CD8-positive, alpha-beta T cell (primary cell): ENCODE measurements at regions of chr5 and their contacts with region 1.

Region 1: DNA sequence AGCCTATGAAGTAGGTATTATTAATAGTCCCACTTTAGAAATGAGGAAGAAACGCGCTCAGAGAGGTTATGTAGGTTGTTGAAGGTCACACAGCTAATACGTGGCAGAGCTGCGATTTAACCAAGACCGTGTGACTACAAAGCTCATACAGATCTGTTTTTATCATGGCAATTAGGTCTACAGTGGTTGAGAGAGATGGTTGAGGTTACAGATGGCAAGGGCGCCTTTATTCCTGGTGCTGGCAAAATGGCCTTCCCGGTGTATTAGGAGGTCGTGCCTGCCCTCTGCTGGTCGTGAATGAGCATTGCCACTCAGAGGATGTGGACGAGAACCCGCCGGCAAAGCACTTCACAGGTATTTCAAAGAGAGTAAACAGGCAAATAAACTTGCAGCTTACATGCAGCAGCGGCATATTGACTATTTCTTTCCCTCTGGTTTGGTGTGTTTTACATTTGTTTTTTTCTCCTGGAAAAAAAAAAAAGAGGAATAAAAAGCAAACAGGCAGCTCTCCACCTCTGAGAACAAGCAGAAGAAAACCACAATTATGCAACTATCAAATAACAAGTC is 65.3 kb upstream of the EGFLAM start:
- DNase-seq: peak; percentile 6 to 62 (median 42)
- ATAC-seq: no peak
- H3K4me3 ChIP-seq: no peak overlapping the region
- H3K4me3 Mint-ChIP-seq: no peak overlapping the region
- H3K27ac ChIP-seq: no peak overlapping the region
- H3K27ac Mint-ChIP-seq: no peak overlapping the region
- H3K4me1 ChIP-seq: no peaks in the 10 kb centered on the region
- H3K4me1 Mint-ChIP-seq: peaks cover 5% of the 10 kb centered on the region
- H3K27me3 ChIP-seq: no peaks in the 10 kb centered on the region
- H3K27me3 Mint-ChIP-seq: peaks cover 40% of the 10 kb centered on the region
- CTCF ChIP-seq: peak; percentile 81

Region 2: GRCh38 chr5:36720688-36721087 is 1472.4 kb before region 1 on chr5:
- CTCF ChIA-PET with region 1: no interaction called
- POLR2A ChIA-PET with region 1: no interaction called
- intact Hi-C with region 1: no loop called
- DNase-seq: no peak
- ATAC-seq: no peak
- H3K4me3 ChIP-seq: no peak overlapping the region
- H3K4me3 Mint-ChIP-seq: no peak overlapping the region
- H3K27ac ChIP-seq: no peak overlapping the region
- H3K27ac Mint-ChIP-seq: no peak overlapping the region
- H3K4me1 ChIP-seq: peaks cover 4% of the 10 kb centered on the region
- H3K4me1 Mint-ChIP-seq: peaks cover 24% of the 10 kb centered on the region
- H3K27me3 ChIP-seq: no peaks in the 10 kb centered on the region
- H3K27me3 Mint-ChIP-seq: no peaks in the 10 kb centered on the region
- CTCF ChIP-seq: no peak

Region 3: GRCh38 chr5:37412515-37413277 is 780.4 kb before region 1 on chr5:
- CTCF ChIA-PET with region 1: interaction called, 9 read pairs
- POLR2A ChIA-PET with region 1: no interaction called
- intact Hi-C with region 1: loop called in 1 of 2 experiments (anchors 2 kb)
- DNase-seq: peak in 6 of 9 experiments; percentile 0 to 65 (median 22)
- ATAC-seq: peak; percentile 40
- H3K4me3 ChIP-seq: no peak overlapping the region
- H3K4me3 Mint-ChIP-seq: no peak overlapping the region
- H3K27ac ChIP-seq: no peak overlapping the region
- H3K27ac Mint-ChIP-seq: no peak overlapping the region
- H3K4me1 ChIP-seq: no peaks in the 10 kb centered on the region
- H3K4me1 Mint-ChIP-seq: no peaks in the 10 kb centered on the region
- H3K27me3 ChIP-seq: no peaks in the 10 kb centered on the region
- H3K27me3 Mint-ChIP-seq: no peaks in the 10 kb centered on the region
- CTCF ChIP-seq: peak; percentile 65

Region 4: GRCh38 chr5:37837414-37838032 is 355.6 kb before region 1 on chr5:
- CTCF ChIA-PET with region 1: no interaction called
- POLR2A ChIA-PET with region 1: no interaction called
- intact Hi-C with region 1: loop called in 1 of 2 experiments (anchors 5 kb)
- DNase-seq: peak in 5 of 9 experiments; percentile 4 to 27 (median 20)
- ATAC-seq: no peak
- H3K4me3 ChIP-seq: no peak overlapping the region
- H3K4me3 Mint-ChIP-seq: peak overlapping the region; percentile 29
- H3K27ac ChIP-seq: no peak overlapping the region
- H3K27ac Mint-ChIP-seq: no peak overlapping the region
- H3K4me1 ChIP-seq: peaks cover 13% of the 10 kb centered on the region
- H3K4me1 Mint-ChIP-seq: peaks cover 24% of the 10 kb centered on the region
- H3K27me3 ChIP-seq: peaks cover 9 to 16% of the 10 kb centered on the region in 2 experiments
- H3K27me3 Mint-ChIP-seq: peaks cover 62% of the 10 kb centered on the region
- CTCF ChIP-seq: no peak

Region 5: GRCh38 chr5:38157024-38157423 is 36.1 kb before region 1 on chr5:
- CTCF ChIA-PET with region 1: no interaction called
- POLR2A ChIA-PET with region 1: no interaction called
- intact Hi-C with region 1: no loop called
- DNase-seq: no peak
- ATAC-seq: no peak
- H3K4me3 ChIP-seq: no peak overlapping the region
- H3K4me3 Mint-ChIP-seq: no peak overlapping the region
- H3K27ac ChIP-seq: no peak overlapping the region
- H3K27ac Mint-ChIP-seq: no peak overlapping the region
- H3K4me1 ChIP-seq: no peaks in the 10 kb centered on the region
- H3K4me1 Mint-ChIP-seq: no peaks in the 10 kb centered on the region
- H3K27me3 ChIP-seq: no peaks in the 10 kb centered on the region
- H3K27me3 Mint-ChIP-seq: peaks cover 3% of the 10 kb centered on the region
- CTCF ChIP-seq: no peak

Region 6: GRCh38 chr5:38226091-38226490 is 33.0 kb after region 1 on chr5:
- CTCF ChIA-PET with region 1: no interaction called
- POLR2A ChIA-PET with region 1: no interaction called
- intact Hi-C with region 1: no loop called
- DNase-seq: no peak
- ATAC-seq: no peak
- H3K4me3 ChIP-seq: no peak overlapping the region
- H3K4me3 Mint-ChIP-seq: no peak overlapping the region
- H3K27ac ChIP-seq: no peak overlapping the region
- H3K27ac Mint-ChIP-seq: no peak overlapping the region
- H3K4me1 ChIP-seq: no peaks in the 10 kb centered on the region
- H3K4me1 Mint-ChIP-seq: no peaks in the 10 kb centered on the region
- H3K27me3 ChIP-seq: no peaks in the 10 kb centered on the region
- H3K27me3 Mint-ChIP-seq: peaks cover 5% of the 10 kb centered on the region
- CTCF ChIP-seq: no peak